Left ventricle myocardium superior (tissue), 1 donor: ENCODE measurements at regions of chr12 and their contacts with region 1.

Region 1: GRCh38 chr12:124354400-124354799 is 59.5 kb downstream of the RFLNA start:
- DNase-seq: no peak
- ATAC-seq: no peak

Region 2: GRCh38 chr12:123633379-123634141 is 720.8 kb before region 1 on chr12 and contains the starts of genes EIF2B1 and GTF2H3:
- intact Hi-C with region 1: no loop called
- DNase-seq: peak; percentile 98
- ATAC-seq: peak; percentile 99
- total RNA-seq, gene EIF2B1: 27.5 TPM
- total RNA-seq, gene GTF2H3: 12.2 TPM

Region 3: DNA sequence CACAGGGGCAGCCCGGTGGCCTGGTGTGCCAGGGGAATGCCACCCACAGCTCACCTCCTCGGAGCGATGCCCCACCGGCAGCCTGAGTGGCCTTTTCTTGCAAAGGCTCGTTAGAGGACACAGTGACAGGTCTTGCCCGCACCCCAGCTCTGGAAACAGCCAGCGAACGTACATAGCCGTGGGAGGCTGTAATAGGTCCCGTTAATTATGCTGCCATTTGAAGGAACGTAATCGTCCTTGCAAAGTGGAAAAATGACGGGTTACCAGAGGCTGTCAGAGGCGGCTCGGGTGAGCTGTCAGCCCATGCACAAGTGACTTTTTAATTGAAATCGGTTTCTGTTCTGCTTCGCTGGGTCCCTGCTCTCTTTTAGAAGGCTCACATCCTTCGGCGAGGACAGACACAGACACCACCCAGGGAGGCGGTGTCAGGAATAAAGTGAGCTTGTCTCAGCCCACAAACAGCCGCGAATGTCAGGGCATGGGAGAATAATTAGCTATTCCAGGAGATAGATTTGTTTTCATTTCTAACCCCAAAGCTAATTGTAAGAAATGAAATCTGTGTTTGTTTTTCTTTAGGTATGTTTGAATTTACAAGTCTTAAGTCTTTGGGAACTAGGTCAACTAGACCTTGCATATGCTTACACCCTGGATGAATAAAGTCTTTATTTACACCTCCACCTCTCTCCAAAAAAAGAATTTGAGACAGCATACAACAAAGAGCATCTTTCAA is 136.7 kb before region 1 on chr12:
- intact Hi-C with region 1: no loop called
- DNase-seq: no peak
- ATAC-seq: no peak

Region 4: DNA sequence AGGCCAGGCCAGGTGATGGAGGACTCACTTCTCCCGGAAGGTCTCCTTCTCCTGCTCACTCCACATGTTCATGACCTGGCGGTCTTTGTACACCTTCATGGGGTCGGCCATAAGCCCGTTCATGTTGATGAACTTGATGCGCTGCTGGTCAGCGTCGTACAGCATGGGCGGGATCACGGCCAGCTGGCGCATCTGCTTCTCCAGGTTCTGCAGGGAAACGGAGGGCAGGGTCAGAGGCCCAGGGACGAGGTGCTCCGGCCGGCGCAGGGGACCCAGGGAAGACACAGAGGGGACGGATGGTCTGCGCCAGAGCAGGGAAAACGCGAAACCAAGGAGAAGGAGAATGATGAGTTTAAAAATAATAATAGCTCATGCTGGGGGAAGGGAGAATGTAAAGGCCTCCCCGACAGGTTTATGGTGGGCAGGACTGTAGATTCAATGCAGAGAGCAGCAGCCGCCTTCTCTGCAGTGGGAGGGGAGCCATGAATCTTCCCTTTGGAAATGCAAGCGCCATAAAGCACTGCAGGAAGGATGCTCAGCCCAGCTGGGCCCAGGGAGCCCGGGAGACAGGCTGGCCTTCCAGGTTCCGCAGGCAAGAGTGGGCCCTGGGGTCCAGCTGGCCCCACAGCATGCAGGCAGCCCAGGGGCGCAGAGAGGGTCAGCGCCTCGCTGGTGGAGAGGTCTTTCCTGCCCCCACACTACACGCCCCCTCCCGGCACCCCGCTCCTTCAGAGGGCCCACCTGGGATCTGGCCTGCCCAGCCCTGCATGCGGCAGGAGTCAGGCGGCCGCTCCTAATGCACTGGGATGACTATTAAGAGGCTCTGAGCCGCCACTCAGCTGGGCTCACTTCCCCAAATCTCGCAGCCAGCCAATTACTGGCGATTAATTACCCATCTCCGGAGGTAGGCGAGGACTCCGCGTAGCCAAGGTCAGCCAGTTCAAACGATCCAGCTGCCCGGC is 72.5 kb after region 1 on chr12:
- intact Hi-C with region 1: loop called (anchors 2 kb)
- DNase-seq: no peak
- ATAC-seq: no peak